IMR-90 (cell line): ENCODE measurements at regions of chr2 and their contacts with region 1.

Region 1: GRCh38 chr2:71410696-71411095 is 42.7 kb upstream of the DYSF start:
- DNase-seq: no peak
- ATAC-seq: no peak
- H3K4me3 ChIP-seq: no peak overlapping the region
- H3K27ac ChIP-seq: no peak overlapping the region
- H3K4me1 ChIP-seq: no peaks in the 10 kb centered on the region
- H3K27me3 ChIP-seq: no peaks in the 10 kb centered on the region
- CTCF ChIP-seq: no peak
- POLR2A ChIP-seq: no peak
- RAD21 ChIP-seq: no peak

Region 2: GRCh38 chr2:71361631-71362030 is 49.1 kb before region 1 on chr2:
- CTCF ChIA-PET with region 1: no interaction called
- POLR2A ChIA-PET with region 1: no interaction called
- dilution Hi-C with region 1: no loop called
- in situ Hi-C with region 1: no loop called
- intact Hi-C with region 1: loop called (anchors 5 kb)
- DNase-seq: no peak
- ATAC-seq: no peak
- H3K4me3 ChIP-seq: no peak overlapping the region
- H3K27ac ChIP-seq: no peak overlapping the region
- H3K4me1 ChIP-seq: no peaks in the 10 kb centered on the region; the same call in 1 of the 2 replicates
- H3K27me3 ChIP-seq: no peaks in the 10 kb centered on the region
- CTCF ChIP-seq: no peak
- POLR2A ChIP-seq: no peak
- RAD21 ChIP-seq: no peak

Region 3: GRCh38 chr2:71393216-71393615 is 17.5 kb before region 1 on chr2:
- CTCF ChIA-PET with region 1: no interaction called
- POLR2A ChIA-PET with region 1: no interaction called
- dilution Hi-C with region 1: no loop called
- in situ Hi-C with region 1: no loop called
- intact Hi-C with region 1: no loop called
- DNase-seq: no peak
- ATAC-seq: no peak
- H3K4me3 ChIP-seq: no peak overlapping the region
- H3K27ac ChIP-seq: no peak overlapping the region
- H3K4me1 ChIP-seq: no peaks in the 10 kb centered on the region
- H3K27me3 ChIP-seq: no peaks in the 10 kb centered on the region
- CTCF ChIP-seq: no peak
- POLR2A ChIP-seq: no peak
- RAD21 ChIP-seq: no peak

Region 4: GRCh38 chr2:71423817-71424420 is 13.2 kb after region 1 on chr2:
- CTCF ChIA-PET with region 1: interaction called, 3 read pairs
- POLR2A ChIA-PET with region 1: no interaction called
- dilution Hi-C with region 1: no loop called
- in situ Hi-C with region 1: no loop called
- intact Hi-C with region 1: loop called (anchors 2 kb)
- DNase-seq: no peak
- ATAC-seq: no peak
- H3K4me3 ChIP-seq: no peak overlapping the region
- H3K27ac ChIP-seq: no peak overlapping the region
- H3K4me1 ChIP-seq: no peaks in the 10 kb centered on the region; the same call in 1 of the 2 replicates
- H3K27me3 ChIP-seq: no peaks in the 10 kb centered on the region
- CTCF ChIP-seq: no peak
- POLR2A ChIP-seq: no peak
- RAD21 ChIP-seq: no peak